Dorsolateral prefrontal cortex (tissue), 120 donors: ENCODE measurements at regions of chr2 and their contacts with region 1.

Region 1: GRCh38 chr2:238320246-238320647 is at the start of gene TRAF3IP1:
- DNase-seq: peak; percentile 87 to 97 (median 92)
- H3K4me3 ChIP-seq: peak within 1 kb of the TSS; percentile 53 to 92 (median 77)
- H3K27ac ChIP-seq: peak within 1 kb of the TSS in 30 of 59 donors; percentile 5 to 81 (median 48)
- H3K27me3 ChIP-seq: no peaks in the 10 kb centered on the region
- CTCF ChIP-seq: peak in 23 of 56 donors; percentile 9 to 47 (median 28)
- total RNA-seq, gene TRAF3IP1: 17.6 to 47.3 (median 30.2) TPM

Region 2: DNA sequence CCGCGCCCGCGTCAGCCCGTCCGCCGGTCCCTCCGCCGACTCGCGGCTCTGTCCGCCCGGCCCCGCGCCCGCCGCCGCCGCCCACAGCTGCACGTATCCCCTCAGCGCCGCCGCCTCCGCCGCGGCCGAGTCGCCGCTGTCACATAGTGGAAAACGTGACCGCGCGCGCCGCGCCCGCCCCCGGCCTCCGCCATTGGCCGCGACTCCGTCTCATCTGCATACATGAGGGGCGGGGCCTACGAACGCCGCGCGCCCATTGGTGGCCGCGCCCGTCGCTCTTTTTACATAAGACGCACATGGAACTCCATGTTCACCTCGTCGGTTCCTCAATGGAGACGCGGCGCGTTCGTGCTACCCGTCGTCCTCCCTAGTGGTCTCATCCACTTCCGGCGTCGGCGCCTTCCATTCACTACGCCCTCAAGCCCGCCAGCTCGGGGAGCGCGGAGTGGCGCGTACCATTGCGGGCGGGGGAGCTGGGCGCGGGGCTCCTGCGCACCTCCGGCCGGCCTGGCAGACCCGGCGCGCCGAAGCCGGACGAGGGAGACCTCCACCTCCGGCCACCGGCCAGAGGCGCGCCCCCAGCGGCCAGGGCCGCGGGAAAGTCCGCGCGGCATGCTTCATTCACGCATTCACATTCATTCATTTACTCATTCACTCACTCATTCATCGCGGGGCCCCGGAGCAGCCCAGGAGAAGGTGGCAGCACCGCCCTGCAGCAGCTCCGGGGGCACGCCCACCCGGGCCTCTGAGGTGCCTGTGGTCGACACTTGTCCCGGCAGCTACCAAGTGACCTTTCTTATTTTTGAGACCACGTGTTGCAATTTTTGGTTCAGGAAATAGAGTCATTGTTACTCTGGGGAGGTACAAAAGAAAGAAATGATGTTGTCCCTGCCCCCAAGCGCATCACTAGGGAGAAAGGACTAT is 31.3 kb before region 1 on chr2:
- intact Hi-C with region 1: loop called (anchors 1 kb)
- DNase-seq: peak; percentile 95 to 100 (median 99)
- H3K4me3 ChIP-seq: peak overlapping the region; percentile 48 to 96 (median 87)
- H3K27ac ChIP-seq: peak overlapping the region in 55 of 59 donors; percentile 17 to 95 (median 80)
- H3K27me3 ChIP-seq: no peaks in the 10 kb centered on the region
- CTCF ChIP-seq: peak in 41 of 56 donors; percentile 7 to 53 (median 35)

Region 3: DNA sequence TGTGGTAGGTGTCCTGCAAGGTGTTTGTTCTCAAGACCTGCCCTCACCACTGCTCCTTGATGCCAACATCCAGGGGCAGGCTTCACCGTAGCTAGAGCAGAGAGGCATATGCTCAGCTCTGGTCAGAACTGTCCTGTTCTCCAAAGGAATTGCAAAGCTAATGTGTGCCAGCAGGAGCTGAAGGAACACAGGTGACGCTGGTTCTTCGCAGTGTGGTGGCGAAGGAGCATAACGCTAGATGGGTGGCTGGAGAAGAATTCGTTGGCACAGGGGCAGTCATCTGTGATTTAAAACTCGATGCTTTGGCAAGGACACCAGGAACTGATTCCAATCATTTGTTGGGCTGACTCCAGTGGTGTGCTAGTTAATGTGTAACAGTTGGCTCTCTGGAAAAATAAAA is 20.4 kb before region 1 on chr2:
- intact Hi-C with region 1: no loop called
- DNase-seq: peak in 4 of 10 donors; percentile 15 to 44 (median 27)
- H3K4me3 ChIP-seq: no peak overlapping the region
- H3K27ac ChIP-seq: peak overlapping the region in 16 of 59 donors; percentile 2 to 76 (median 40)
- H3K27me3 ChIP-seq: no peaks in the 10 kb centered on the region
- CTCF ChIP-seq: no peak